ENCODE measurements at regions of chr4 and their contacts with region 1.

Region 1: GRCh38 chr4:61462451-61463326 is 262.6 kb downstream of the ADGRL3 start:
- DNase-seq: peak; percentile 96
- ATAC-seq: peak; percentile 96
- H3K4me3 ChIP-seq: peak overlapping the region; percentile 40; the same call in 1 of the 2 replicates
- H3K27ac ChIP-seq: peak overlapping the region; percentile 92
- H3K4me1 ChIP-seq: peaks cover 35% of the 10 kb centered on the region
- H3K27me3 ChIP-seq: no peaks in the 10 kb centered on the region
- CTCF ChIP-seq: no peak

Region 2: DNA sequence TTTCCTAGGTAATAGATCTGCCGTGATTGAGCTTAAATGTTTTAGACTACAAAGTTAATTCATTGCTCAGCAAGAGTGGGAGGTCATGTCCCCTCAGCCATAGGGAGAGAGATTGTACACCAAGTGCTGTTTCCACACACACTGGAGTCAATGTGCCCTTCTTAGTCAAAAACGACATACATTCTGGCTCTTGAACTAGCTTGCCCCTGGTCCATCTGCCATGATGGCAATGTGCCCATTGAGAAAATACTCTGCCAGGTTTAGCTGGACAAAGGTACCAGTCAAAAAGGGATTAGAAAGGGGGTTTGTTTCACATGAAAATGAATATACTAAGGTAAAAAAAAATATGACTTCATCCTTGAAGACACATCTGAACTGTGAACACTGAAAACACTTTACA is 639.7 kb before region 1 on chr4:
- CTCF ChIA-PET with region 1: no interaction called
- POLR2A ChIA-PET with region 1: no interaction called
- intact Hi-C with region 1: no loop called
- DNase-seq: no peak
- ATAC-seq: no peak
- H3K4me3 ChIP-seq: no peak overlapping the region
- H3K27ac ChIP-seq: no peak overlapping the region
- H3K4me1 ChIP-seq: no peaks in the 10 kb centered on the region
- H3K27me3 ChIP-seq: no peaks in the 10 kb centered on the region
- CTCF ChIP-seq: no peak

Region 3: DNA sequence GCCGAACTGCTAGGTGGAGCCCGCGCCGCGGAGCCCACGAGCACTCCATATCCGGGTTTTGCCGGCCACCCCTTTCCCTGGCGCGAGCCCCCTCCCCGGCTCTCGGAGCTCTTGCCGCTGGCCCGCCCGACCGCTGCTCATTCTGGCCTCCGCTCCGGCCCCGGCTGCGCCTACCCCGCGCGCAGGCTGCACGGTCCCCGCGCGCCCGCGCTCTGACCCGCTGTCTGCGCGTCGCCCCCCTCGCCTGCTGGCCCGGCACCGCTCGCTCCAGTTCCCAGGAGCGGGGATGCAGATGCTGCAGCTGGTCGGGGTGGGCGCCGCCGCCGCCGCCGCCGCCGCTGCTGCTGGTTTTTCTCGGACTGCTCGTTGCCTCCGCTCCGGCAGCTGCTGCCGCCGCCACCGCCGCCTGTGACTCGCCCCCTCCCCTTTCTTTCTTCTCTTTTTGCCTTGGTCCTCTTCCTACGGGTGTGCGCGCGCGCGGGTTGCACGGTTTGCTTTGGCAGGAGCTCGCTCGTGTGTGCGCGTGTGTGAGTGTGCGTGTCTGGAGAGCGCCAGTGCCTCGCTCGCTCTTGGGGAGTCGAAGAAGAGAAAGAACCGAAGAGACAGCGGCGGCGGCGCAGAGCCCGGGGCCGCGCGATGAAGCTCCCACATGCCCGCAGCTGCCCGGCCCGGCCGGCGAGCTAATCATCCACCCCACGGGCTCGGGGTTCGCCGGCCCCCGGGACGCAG is 262.3 kb before region 1 on chr4 and contains the start of gene ADGRL3:
- CTCF ChIA-PET with region 1: no interaction called
- POLR2A ChIA-PET with region 1: no interaction called
- intact Hi-C with region 1: loop called (anchors 5 kb)
- DNase-seq: no peak
- ATAC-seq: no peak
- H3K4me3 ChIP-seq: peak within 1 kb of the TSS; percentile 65
- H3K27ac ChIP-seq: no peak within 1 kb of the TSS
- H3K4me1 ChIP-seq: peaks cover 26% of the 10 kb centered on the region
- H3K27me3 ChIP-seq: peaks cover 20% of the 10 kb centered on the region
- CTCF ChIP-seq: no peak
- total RNA-seq, gene ADGRL3: 0.66 and 0.69 TPM in 2 replicates

Region 4: DNA sequence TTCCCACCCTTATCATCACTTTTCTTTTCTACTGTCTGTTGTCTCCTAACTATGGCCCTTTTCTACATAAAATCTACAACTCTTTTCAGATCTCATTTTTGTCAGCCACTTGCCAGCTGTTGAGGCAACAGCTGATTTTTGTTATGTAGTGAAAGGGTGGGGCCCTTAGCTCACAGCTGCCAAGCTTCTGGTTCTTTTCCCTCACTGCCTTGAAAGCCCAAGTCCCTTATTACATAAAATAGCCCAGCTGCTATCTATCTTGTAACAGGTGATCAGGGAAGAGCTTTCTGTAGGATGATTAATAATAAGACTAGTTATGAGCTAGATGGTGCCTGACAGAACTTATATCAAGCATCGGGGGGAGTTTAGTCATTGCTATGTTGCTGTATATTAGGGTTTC is 216.7 kb before region 1 on chr4:
- CTCF ChIA-PET with region 1: no interaction called
- POLR2A ChIA-PET with region 1: no interaction called
- intact Hi-C with region 1: loop called (anchors 1 kb)
- DNase-seq: no peak
- ATAC-seq: no peak
- H3K4me3 ChIP-seq: no peak overlapping the region
- H3K27ac ChIP-seq: no peak overlapping the region
- H3K4me1 ChIP-seq: peaks cover 15% of the 10 kb centered on the region
- H3K27me3 ChIP-seq: no peaks in the 10 kb centered on the region
- CTCF ChIP-seq: no peak

Region 5: GRCh38 chr4:61401771-61402170 is 60.9 kb before region 1 on chr4:
- CTCF ChIA-PET with region 1: no interaction called
- POLR2A ChIA-PET with region 1: no interaction called
- intact Hi-C with region 1: loop called (anchors 1 kb)
- DNase-seq: peak; percentile 78
- ATAC-seq: peak; percentile 85
- H3K4me3 ChIP-seq: no peak overlapping the region
- H3K27ac ChIP-seq: no peak overlapping the region
- H3K4me1 ChIP-seq: peaks cover 17% of the 10 kb centered on the region
- H3K27me3 ChIP-seq: no peaks in the 10 kb centered on the region
- CTCF ChIP-seq: no peak

Region 6: GRCh38 chr4:61443813-61444510 is 18.7 kb before region 1 on chr4:
- CTCF ChIA-PET with region 1: no interaction called
- POLR2A ChIA-PET with region 1: no interaction called
- intact Hi-C with region 1: loop called (anchors 1 kb)
- DNase-seq: peak; percentile 82
- ATAC-seq: peak; percentile 87
- H3K4me3 ChIP-seq: peak overlapping the region; percentile 46
- H3K27ac ChIP-seq: peak overlapping the region; percentile 20
- H3K4me1 ChIP-seq: peaks cover 31% of the 10 kb centered on the region
- H3K27me3 ChIP-seq: no peaks in the 10 kb centered on the region
- CTCF ChIP-seq: no peak

Region 7: GRCh38 chr4:61571761-61572559 is 109.3 kb after region 1 on chr4:
- CTCF ChIA-PET with region 1: no interaction called
- POLR2A ChIA-PET with region 1: no interaction called
- intact Hi-C with region 1: loop called (anchors 1 kb)
- DNase-seq: peak; percentile 89
- ATAC-seq: peak; percentile 87
- H3K4me3 ChIP-seq: no peak overlapping the region
- H3K27ac ChIP-seq: peak overlapping the region; percentile 15; the same call in 1 of the 2 replicates
- H3K4me1 ChIP-seq: peaks cover 26% of the 10 kb centered on the region
- H3K27me3 ChIP-seq: no peaks in the 10 kb centered on the region
- CTCF ChIP-seq: no peak

Measured in PC-3 (cell line).